MCF 10A (cell line): ENCODE measurements at regions of chr1 and their contacts with region 1.

Region 1: GRCh38 chr1:107286125-107286524 is 145.3 kb downstream of the NTNG1 start:
- DNase-seq: no peak
- H3K4me3 Mint-ChIP-seq: no peak overlapping the region
- H3K27ac Mint-ChIP-seq: no peak overlapping the region
- H3K4me1 Mint-ChIP-seq: no peaks in the 10 kb centered on the region
- H3K27me3 Mint-ChIP-seq: no peaks in the 10 kb centered on the region
- CTCF ChIP-seq: no peak

Region 2: GRCh38 chr1:107056426-107057196 is 229.5 kb before region 1 on chr1 and contains the start of gene PRMT6:
- CTCF ChIA-PET with region 1: no interaction called
- POLR2A ChIA-PET with region 1: no interaction called
- intact Hi-C with region 1: no loop called
- DNase-seq: peak; percentile 75
- H3K4me3 Mint-ChIP-seq: peak within 1 kb of the TSS; percentile 95
- H3K27ac Mint-ChIP-seq: peak within 1 kb of the TSS; percentile 86
- H3K4me1 Mint-ChIP-seq: peaks cover 12% of the 10 kb centered on the region
- H3K27me3 Mint-ChIP-seq: no peaks in the 10 kb centered on the region
- CTCF ChIP-seq: peak; percentile 8
- total RNA-seq, gene PRMT6: 11.7 and 14.0 TPM in 2 replicates

Region 3: DNA sequence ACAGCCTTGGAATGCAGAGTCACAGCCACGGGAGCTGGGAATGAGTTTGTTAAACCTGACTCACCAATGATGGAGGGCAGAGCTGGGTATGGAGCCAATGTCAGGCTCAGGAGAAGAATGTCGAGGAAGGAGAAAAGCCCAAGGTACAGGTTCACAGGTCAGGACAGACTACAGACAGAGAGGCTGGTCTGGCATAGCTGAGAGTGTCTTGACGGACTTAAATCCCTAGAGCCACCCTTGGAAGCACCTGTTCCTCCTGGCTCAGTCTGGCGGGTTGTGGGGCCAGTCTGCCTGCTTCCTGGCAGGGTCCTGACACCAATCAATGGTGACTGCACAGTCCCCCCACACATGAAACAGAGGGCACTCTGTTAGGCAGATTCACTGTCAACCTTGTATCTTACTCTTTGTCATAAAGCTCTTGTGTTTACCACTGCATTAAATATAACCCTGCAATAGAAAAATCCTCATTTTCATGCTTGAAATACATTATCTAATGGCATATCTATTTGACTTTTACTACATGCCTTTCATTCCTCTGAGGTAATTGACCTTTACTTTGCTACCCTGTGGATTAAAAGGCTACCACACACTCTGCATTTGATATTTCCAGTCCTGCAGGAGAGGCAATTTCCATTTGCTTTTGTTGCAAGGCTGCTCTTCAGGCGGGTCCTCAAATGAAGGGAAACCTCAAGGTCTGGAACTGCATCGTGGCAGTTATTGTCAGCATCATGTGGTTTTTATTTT is 92.6 kb after region 1 on chr1:
- CTCF ChIA-PET with region 1: no interaction called
- POLR2A ChIA-PET with region 1: no interaction called
- intact Hi-C with region 1: loop called (anchors 10 kb)
- DNase-seq: no peak
- H3K4me3 Mint-ChIP-seq: no peak overlapping the region
- H3K27ac Mint-ChIP-seq: no peak overlapping the region
- H3K4me1 Mint-ChIP-seq: no peaks in the 10 kb centered on the region
- H3K27me3 Mint-ChIP-seq: no peaks in the 10 kb centered on the region
- CTCF ChIP-seq: no peak